PC-9 (cell line): ENCODE measurements at regions of chr1 and their contacts with region 1.

Region 1: DNA sequence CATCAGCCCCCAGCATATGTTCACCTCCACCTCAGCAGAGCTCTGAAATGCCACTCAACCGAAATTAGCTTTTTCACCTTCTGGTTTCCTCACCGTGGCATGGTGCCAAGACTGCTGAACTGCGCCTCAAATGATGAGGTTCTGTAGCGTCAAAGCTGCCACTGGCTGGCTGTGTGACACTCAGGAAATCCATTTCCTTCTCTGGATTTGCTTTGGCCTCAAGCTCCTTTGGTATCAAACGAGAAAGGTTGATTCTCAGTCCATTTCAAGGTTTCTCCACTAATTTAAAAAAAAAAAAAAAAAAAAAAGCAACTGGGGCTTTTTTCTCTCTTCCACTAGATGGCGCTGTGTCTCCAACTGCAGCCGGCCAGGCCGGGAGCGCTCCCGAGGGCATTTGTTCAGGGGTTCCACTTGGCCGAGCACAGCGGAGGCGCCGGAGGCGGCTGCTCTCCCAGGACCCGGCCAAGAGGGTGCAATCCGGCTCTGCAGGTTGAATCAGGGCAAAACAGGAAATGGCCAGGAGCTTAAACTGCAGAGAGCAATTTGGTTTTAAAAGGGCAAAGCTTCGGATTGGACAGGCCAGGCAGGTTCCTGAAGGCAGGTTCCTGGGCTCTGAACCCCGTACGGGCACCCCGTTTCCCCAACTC is 26.5 kb upstream of the PLA2G2C start:
- DNase-seq: peak; percentile 90 to 92
- H3K4me3 ChIP-seq: peak overlapping the region; percentile 47; the same call in 1 of the 2 replicates
- H3K27ac ChIP-seq: peak overlapping the region; percentile 99
- H3K4me1 ChIP-seq: peaks cover 58% of the 10 kb centered on the region
- H3K27me3 ChIP-seq: no peaks in the 10 kb centered on the region
- CTCF ChIP-seq: peak; percentile 91

Region 2: DNA sequence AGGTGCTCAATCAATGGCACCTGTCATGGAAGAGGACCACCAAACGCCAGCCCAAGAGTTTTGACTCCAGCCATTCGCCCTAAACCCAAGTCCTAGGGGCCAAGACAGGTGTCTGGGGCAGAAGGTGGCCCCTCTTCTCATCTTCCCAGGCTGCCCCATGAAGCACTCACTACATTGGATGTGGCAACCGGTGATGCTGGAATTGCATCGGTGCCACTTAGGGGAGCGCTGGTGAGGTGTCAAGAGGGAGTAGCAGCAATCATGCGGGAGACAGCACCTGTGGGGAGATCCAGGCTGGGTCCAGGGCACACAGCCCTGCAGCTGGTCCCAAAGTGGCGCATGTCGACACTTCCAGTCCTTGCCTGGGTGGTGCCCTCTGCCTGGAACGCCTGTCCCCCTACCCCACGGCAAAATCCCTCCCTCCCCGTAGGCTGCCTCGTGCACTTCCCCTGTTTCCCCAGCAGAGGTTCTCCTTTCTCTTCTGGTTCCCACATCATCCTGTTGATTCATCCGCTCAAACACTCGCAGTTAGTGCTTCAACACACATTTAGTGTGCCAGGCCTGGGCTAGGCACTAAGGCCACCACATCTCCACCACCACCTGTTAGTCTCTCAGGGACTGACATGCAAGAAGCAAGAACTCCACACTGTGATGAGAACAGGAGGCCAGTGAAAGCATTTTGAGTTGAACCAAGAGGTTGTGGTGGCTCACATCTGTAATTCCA is 112.0 kb before region 1 on chr1:
- CTCF ChIA-PET with region 1: interaction called, 3 read pairs
- POLR2A ChIA-PET with region 1: no interaction called
- intact Hi-C with region 1: loop called (anchors 1 kb)
- DNase-seq: peak; percentile 45 to 58
- H3K4me3 ChIP-seq: no peak overlapping the region
- H3K27ac ChIP-seq: no peak overlapping the region
- H3K4me1 ChIP-seq: peaks cover 31% of the 10 kb centered on the region
- H3K27me3 ChIP-seq: no peaks in the 10 kb centered on the region
- CTCF ChIP-seq: peak; percentile 82

Region 3: DNA sequence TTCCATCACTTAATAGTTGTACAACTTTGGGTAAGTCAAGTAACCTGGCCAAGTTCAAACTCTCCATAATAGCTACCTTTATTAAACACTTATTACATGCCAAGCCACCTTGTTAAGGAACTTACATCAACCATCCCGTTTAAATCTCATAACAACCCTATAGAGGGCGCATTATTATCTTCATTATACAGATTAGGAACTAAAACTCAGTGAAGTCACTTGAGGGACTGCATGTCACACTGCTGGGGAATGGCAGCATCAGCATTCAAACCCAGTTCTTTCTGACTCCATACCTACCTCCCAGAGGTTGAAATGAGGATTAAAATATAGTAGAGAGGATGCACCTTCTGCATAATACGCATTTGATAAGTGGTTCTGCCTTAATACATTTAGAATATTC is 20.6 kb after region 1 on chr1:
- CTCF ChIA-PET with region 1: no interaction called
- POLR2A ChIA-PET with region 1: no interaction called
- intact Hi-C with region 1: loop called (anchors 1 kb)
- DNase-seq: peak in 1 of 2 experiments; percentile 64
- H3K4me3 ChIP-seq: peak overlapping the region; percentile 23; the same call in 1 of the 2 replicates
- H3K27ac ChIP-seq: peak overlapping the region; percentile 91
- H3K4me1 ChIP-seq: peaks cover 75% of the 10 kb centered on the region
- H3K27me3 ChIP-seq: no peaks in the 10 kb centered on the region
- CTCF ChIP-seq: peak; percentile 54

Region 4: GRCh38 chr1:20250341-20250989 is 37.7 kb after region 1 on chr1:
- CTCF ChIA-PET with region 1: no interaction called
- POLR2A ChIA-PET with region 1: no interaction called
- intact Hi-C with region 1: no loop called
- DNase-seq: peak; percentile 33 to 80
- H3K4me3 ChIP-seq: peak overlapping the region; percentile 39; the same call in 1 of the 2 replicates
- H3K27ac ChIP-seq: peak overlapping the region; percentile 84
- H3K4me1 ChIP-seq: peaks cover 33% of the 10 kb centered on the region
- H3K27me3 ChIP-seq: no peaks in the 10 kb centered on the region
- CTCF ChIP-seq: no peak

Region 5: DNA sequence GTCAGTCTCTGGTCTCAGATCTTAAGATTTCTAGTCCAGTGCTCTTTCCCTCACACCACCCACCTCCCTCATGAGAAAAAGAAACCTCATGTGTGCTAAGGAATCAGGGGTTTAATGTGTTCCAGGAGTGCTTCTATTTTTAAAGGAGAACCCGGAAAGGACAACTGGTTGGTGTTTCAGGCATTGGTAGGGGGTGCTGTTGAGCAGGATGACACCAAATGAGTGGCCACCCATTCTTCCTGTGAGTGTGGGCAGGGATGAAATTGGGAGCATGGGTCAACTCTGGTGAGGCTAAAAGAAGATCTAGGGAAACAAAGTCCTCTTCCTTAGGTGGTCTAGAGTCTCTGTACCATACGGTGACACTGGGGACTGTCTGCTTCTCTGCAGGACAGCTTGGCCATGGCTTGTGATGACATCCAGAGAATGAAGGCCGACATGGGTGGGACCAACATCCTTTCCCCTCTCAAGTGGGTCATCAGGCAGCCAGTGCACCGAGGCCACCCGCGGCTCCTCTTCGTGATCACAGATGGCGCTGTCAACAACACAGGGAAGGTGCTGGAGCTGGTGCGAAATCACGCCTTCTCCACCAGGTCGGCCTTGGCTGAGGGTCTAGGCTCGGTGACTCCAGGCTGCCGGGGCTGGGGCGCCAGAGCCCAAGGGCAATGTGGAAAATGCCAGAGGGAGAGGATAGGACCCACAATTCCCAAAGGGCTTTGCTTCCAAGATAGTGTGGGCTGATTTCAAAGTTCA is 117.2 kb after region 1 on chr1:
- CTCF ChIA-PET with region 1: interaction called, 15 read pairs
- POLR2A ChIA-PET with region 1: no interaction called
- intact Hi-C with region 1: no loop called
- DNase-seq: no peak
- H3K4me3 ChIP-seq: no peak overlapping the region
- H3K27ac ChIP-seq: no peak overlapping the region
- H3K4me1 ChIP-seq: no peaks in the 10 kb centered on the region
- H3K27me3 ChIP-seq: no peaks in the 10 kb centered on the region
- CTCF ChIP-seq: no peak

Region 6: DNA sequence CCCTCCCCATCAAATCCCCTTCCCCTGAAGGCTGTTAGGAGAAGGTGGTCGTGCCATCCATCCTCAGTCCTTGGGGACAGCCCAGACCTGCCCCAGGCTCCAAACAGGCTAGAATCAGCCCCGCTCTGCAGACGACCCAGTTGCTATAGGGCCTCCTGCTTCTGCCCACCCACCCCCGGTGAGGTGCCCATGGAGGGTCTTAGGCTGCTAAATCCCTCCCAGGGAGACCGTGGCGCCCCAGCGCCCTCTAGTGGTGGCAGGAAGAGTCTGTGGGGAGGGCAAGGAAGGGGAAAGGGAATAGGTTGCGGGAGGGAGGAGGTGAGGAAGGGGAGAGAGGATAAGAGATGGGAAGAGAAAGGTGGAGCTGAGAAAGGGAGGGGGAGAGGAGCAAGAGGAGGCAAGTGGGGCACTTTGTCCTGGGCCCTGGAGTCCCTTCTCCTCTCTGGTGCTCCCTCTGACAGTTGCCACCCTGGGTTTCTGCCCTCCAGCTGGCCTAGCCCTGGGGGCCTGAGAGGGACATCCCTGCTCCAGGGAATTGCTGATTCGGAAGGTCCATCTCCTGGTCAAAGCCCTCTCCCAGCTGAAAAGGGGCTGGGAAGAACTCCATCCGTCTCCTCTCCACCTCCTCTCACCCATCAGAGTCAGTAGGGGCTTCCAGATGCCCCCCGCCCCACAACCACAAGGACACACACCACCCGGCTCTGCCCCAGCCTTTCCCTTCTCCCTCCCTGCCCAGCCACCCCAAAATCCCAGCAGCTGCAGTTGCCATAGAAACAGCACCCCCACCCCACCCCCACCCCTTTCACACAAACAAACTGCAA is 217.8 kb after region 1 on chr1:
- CTCF ChIA-PET with region 1: no interaction called
- POLR2A ChIA-PET with region 1: no interaction called
- intact Hi-C with region 1: loop called (anchors 2 kb)
- DNase-seq: peak in 1 of 2 experiments; percentile 25
- H3K4me3 ChIP-seq: no peak overlapping the region
- H3K27ac ChIP-seq: no peak overlapping the region
- H3K4me1 ChIP-seq: peaks cover 13% of the 10 kb centered on the region
- H3K27me3 ChIP-seq: no peaks in the 10 kb centered on the region
- CTCF ChIP-seq: peak; percentile 76

Region 7: GRCh38 chr1:20633190-20634064 is 420.6 kb after region 1 on chr1 and contains the start of gene PINK1:
- CTCF ChIA-PET with region 1: no interaction called
- POLR2A ChIA-PET with region 1: no interaction called
- intact Hi-C with region 1: loop called (anchors 1 kb)
- DNase-seq: peak; percentile 52 to 87
- H3K4me3 ChIP-seq: peak within 1 kb of the TSS; percentile 58
- H3K27ac ChIP-seq: 0 out of 2 replicates have a peak within 1 kb of the TSS, but pooled peaks have one; percentile 26
- H3K4me1 ChIP-seq: peaks cover 19% of the 10 kb centered on the region
- H3K27me3 ChIP-seq: no peaks in the 10 kb centered on the region
- CTCF ChIP-seq: peak; percentile 91
- total RNA-seq, gene PINK1: 46.5 and 48.6 TPM in 2 replicates